CD4-positive, alpha-beta T cell (primary cell): ENCODE measurements at regions of chr19 and their contacts with region 1.

Region 1: GRCh38 chr19:17784201-17785008 is 10.5 kb upstream of the B3GNT3 start:
- DNase-seq: peak; percentile 62 to 86 (median 72)
- ATAC-seq: peak; percentile 95
- H3K4me3 ChIP-seq: no peak overlapping the region
- H3K4me3 Mint-ChIP-seq: no peak overlapping the region
- H3K27ac ChIP-seq: no peak overlapping the region
- H3K27ac Mint-ChIP-seq: peak overlapping the region; percentile 18
- H3K4me1 ChIP-seq: peaks cover 10% of the 10 kb centered on the region
- H3K4me1 Mint-ChIP-seq: peaks cover 15% of the 10 kb centered on the region
- H3K27me3 ChIP-seq: no peaks in the 10 kb centered on the region
- H3K27me3 Mint-ChIP-seq: no peaks in the 10 kb centered on the region
- CTCF ChIP-seq: peak; percentile 71

Region 2: DNA sequence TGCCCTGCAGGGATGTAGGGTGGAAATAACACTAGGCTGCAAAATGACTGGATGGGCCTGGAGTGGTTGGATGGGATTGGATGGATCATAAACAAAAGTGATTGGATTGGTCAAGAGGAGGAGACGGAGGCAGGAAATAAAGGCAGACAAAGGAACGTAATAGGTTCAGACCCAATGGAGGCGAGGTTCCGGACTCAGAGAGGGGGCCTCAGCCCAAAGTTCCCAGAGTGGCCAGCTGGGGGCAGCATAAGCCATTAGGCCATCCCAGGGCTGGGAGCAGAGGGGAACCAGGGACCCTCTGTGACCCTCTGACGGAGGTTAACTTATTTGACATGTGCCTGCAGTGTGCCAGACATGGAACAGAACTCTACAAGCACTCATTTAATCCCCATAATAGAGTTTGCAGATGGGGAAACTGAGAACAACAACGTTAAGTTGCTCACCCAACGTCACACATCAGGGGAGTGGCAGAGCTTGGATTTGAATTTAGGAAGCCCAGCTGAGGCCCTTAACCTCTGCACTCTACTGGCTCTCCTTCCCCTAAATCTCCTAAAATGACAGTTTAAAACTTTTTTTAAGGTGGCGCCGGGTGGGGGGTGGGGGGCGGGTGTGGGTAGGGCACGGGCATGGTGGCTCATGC is 80.5 kb before region 1 on chr19:
- CTCF ChIA-PET with region 1: interaction called, 8 read pairs
- POLR2A ChIA-PET with region 1: no interaction called
- intact Hi-C with region 1: loop called (anchors 1 to 2 kb)
- DNase-seq: peak; percentile 63 to 80 (median 66)
- ATAC-seq: peak; percentile 99
- H3K4me3 ChIP-seq: no peak overlapping the region
- H3K4me3 Mint-ChIP-seq: no peak overlapping the region
- H3K27ac ChIP-seq: no peak overlapping the region
- H3K27ac Mint-ChIP-seq: no peak overlapping the region
- H3K4me1 ChIP-seq: peaks cover 4% of the 10 kb centered on the region
- H3K4me1 Mint-ChIP-seq: peaks cover 4% of the 10 kb centered on the region
- H3K27me3 ChIP-seq: peaks cover 2 to 4% of the 10 kb centered on the region in 2 experiments
- H3K27me3 Mint-ChIP-seq: peaks cover 6% of the 10 kb centered on the region
- CTCF ChIP-seq: peak; percentile 93

Region 3: DNA sequence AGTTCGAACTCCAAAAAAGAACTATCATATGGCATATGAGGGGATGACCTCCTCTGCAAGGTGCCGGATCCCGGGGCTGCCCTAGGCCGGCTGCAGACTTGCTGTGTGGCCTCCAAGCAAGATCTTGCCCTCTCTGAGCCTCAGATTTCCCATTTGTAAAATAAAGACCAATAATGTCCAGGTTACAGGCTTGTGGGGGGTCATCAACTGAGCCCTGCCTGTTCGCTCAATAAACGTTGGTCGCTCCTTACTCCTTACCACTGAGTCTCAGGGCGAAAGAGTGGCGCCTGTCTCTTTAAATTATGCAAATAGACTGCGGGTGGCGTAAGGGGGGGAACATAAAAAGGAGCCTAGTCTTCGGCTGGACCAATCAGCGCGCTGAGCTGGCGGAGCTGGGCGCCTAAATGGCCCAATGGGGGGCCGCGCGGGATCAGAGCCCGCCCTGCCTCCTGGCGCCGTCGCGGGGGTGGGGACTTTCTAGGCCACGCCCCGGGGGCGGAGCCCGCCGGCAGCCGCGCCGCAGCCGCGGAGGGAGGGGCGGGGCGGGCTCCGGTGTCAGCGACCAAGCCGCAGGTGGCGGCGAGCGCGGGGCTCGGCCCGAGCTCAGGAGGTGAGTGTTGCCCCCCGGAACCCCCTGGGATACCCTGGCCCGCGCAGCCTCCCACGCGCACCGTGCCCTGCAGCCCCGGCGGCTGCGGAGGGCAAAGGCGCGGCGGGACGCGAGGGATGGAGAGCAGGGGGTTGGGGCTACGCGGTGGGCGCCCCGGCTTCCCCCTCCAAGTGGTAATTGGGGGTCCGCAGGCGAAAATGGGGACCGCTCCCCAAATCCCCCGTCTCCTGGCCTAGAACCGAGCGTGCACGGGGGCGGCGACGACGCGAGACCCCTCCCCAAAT is 37.0 kb before region 1 on chr19:
- CTCF ChIA-PET with region 1: no interaction called
- POLR2A ChIA-PET with region 1: no interaction called
- intact Hi-C with region 1: loop called in 1 of 2 experiments (anchors 2 kb)
- DNase-seq: peak; percentile 88 to 98 (median 94)
- ATAC-seq: peak; percentile 87
- H3K4me3 ChIP-seq: peak overlapping the region; percentile 69
- H3K4me3 Mint-ChIP-seq: peak overlapping the region; percentile 96
- H3K27ac ChIP-seq: no peak overlapping the region
- H3K27ac Mint-ChIP-seq: peak overlapping the region; percentile 82
- H3K4me1 ChIP-seq: peaks cover 56% of the 10 kb centered on the region
- H3K4me1 Mint-ChIP-seq: peaks cover 47% of the 10 kb centered on the region
- H3K27me3 ChIP-seq: no peaks in the 10 kb centered on the region
- H3K27me3 Mint-ChIP-seq: no peaks in the 10 kb centered on the region
- CTCF ChIP-seq: no peak